Right ventricle myocardium inferior (tissue), 1 donor: ENCODE measurements at regions of chr11 and their contacts with region 1.

Region 1: GRCh38 chr11:17978553-17979287 is 34.1 kb downstream of the SERGEF start:
- DNase-seq: no peak
- ATAC-seq: peak; percentile 79

Region 2: GRCh38 chr11:17598700-17599459 is 379.8 kb before region 1 on chr11:
- intact Hi-C with region 1: loop called (anchors 2 kb)
- DNase-seq: no peak
- ATAC-seq: peak; percentile 71

Region 3: DNA sequence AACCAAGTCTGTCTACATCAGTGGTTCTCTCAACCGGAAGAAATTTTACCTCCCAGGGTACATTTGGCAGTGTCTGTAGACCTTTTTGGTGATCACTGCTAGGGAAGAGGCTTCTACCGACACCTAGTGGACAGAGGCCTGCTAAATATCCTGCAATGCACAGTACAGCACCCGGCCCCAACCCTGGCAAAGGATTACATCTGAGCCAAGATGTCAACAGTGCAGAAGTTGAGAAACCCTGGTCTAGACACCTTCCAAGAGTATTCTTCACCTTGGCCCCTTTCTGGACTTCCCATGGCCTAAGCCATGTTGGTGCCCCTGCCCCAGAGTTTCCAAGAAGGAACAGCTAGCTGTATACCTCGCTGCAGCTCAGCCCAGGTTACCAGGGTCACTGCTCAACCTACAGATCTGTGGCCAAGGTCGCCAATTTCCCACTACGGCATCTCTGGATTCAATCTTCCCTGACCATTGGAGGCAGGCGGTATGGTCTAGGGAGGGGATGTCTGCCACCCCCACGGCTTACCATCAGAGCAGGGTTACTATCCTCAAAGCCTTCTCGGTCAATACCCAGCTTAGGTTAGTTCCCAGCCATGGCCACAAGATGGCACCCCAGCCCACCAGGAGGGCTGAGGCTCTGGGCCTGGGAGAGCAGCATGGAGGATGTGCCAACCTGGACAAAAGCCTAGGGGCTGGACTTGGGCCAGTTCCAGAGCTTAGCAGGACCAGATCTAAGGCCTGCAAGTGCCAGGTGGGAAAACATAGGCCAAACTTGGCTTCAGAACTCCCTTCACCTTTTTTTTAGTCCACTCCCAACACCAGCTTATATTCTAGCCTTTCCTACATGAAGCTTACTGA is 247.9 kb before region 1 on chr11:
- intact Hi-C with region 1: loop called (anchors 1 kb)
- DNase-seq: peak; percentile 73
- ATAC-seq: peak; percentile 88

Region 4: GRCh38 chr11:17760102-17761029 is 218.4 kb before region 1 on chr11:
- intact Hi-C with region 1: loop called (anchors 1 kb)
- DNase-seq: peak; percentile 51
- ATAC-seq: peak; percentile 69

Region 5: DNA sequence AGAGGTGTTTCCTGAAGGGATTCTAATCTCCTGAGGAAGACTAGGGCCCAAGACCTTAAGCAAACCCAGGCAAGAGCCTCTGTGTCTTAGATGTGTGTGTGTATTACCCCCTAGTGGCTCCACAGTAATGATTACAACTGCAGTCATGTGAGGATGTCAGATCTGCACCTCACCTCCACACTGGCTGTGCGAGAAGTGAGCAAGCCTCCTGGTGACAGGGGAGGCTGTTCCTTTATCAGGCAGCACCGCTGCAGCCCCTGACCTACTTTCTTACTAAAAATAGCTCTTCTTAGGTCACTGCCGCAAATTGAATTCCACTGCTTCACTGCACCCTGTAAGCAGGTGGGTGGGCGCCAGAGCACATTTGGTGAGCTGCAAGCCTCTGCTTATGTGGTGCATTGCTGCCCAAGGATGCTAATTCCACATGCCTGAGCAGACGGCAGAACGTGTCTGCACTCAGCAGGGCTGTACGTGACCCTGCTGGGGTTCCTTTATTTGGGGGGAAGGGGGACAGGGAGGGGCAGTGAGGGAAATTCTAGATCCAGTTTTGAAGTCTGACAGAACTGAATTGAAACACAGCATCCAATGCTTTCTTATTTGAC is 131.8 kb before region 1 on chr11:
- intact Hi-C with region 1: loop called (anchors 10 kb)
- DNase-seq: no peak
- ATAC-seq: peak; percentile 67